ENCODE measurements at regions of chr12 and their contacts with region 1.

Region 1: GRCh38 chr12:6965026-6965661 is 5.3 kb downstream of the PHB2 start:
- DNase-seq: peak; percentile 76 to 89
- H3K4me3 ChIP-seq: no peak overlapping the region
- H3K27ac ChIP-seq: peak overlapping the region; percentile 40 to 72
- H3K4me1 ChIP-seq: peaks cover 10 to 52% (median 33%) of the 10 kb centered on the region in 4 donors
- H3K27me3 ChIP-seq: no peaks in the 10 kb centered on the region
- CTCF ChIP-seq: peak; percentile 84 to 91

Region 2: GRCh38 chr12:6867413-6868210 is 97.5 kb before region 1 on chr12 and contains the start of gene TPI1:
- intact Hi-C with region 1: loop called (anchors 5 kb)
- DNase-seq: peak in 1 of 2 donors; percentile 94
- H3K4me3 ChIP-seq: peak within 1 kb of the TSS; percentile 94 to 100
- H3K27ac ChIP-seq: peak within 1 kb of the TSS; percentile 99 to 100
- H3K4me1 ChIP-seq: peaks cover 0 to 55% (median 44%) of the 10 kb centered on the region in 4 donors
- H3K27me3 ChIP-seq: no peaks in the 10 kb centered on the region
- CTCF ChIP-seq: peak in 1 of 2 experiments; percentile 6

Region 3: GRCh38 chr12:6925540-6926279 is 39.4 kb before region 1 on chr12:
- intact Hi-C with region 1: loop called (anchors 2 kb)
- DNase-seq: peak; percentile 86 to 92
- H3K4me3 ChIP-seq: peak overlapping the region; percentile 97 to 99
- H3K27ac ChIP-seq: peak overlapping the region; percentile 99
- H3K4me1 ChIP-seq: peaks cover 7 to 54% (median 41%) of the 10 kb centered on the region in 4 donors
- H3K27me3 ChIP-seq: no peaks in the 10 kb centered on the region
- CTCF ChIP-seq: peak in 1 of 2 experiments; percentile 17

Region 4: GRCh38 chr12:7018350-7019042 is 53.4 kb after region 1 on chr12 and contains the start of gene LPCAT3:
- intact Hi-C with region 1: loop called (anchors 5 kb)
- DNase-seq: peak; percentile 98 to 99
- H3K4me3 ChIP-seq: peak within 1 kb of the TSS; percentile 66 to 86
- H3K27ac ChIP-seq: peak within 1 kb of the TSS; percentile 84 to 97
- H3K4me1 ChIP-seq: peaks cover 0 to 31% (median 17%) of the 10 kb centered on the region in 4 donors
- H3K27me3 ChIP-seq: no peaks in the 10 kb centered on the region
- CTCF ChIP-seq: peak; percentile 85 to 93

Measured in tibial artery (tissue), 4 donors.